Activated T-helper 2 cell treated with anti-CD3 and anti-CD28 coated beads, Interferon-gamma antibody, Interleukin-2, Interleukin-4, amounts not matched to agents 10 μg/mL and 5 μg/mL and 100 μg/mL, durations not matched to agents 14 hours and 24 hours and 36 hours (primary cell): ENCODE measurements at regions of chr7 and their contacts with region 1.

Region 1: DNA sequence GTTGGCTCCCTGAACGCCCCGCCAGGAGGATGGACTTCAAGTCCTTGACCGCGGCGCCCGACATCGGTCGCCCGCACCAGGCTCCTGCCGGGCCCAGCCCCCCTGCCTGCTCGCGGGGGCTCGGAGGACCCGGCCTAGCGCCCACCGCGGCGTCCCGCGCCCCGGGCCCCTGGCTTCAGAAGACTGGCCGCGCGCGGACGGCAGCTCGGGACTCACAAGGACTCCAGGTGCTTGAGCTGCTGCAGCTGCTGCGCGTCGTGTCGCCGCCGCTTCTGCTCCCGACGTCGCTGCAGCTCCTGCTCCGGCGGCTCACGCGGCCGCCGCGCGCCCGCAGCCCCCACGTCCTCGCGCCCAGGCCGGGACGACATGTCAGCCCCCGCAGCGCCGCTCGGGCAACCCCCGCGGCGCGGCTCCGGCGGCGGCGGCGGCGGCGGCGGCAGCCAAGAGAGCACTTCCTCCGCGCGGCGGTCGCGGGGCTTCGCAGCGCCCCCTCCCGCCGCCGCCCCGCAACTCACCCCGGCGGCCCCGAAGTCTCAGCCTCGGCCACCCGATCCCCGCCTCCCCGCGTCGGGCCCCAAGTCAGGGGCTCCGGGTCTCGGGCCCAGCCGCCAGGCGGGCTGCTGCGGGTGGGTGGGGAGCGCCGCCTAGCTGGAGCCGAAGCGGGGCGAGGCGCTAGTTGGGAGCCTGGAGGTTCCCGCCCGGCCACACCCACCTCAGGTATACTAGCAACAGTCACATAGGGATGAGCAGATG is at the start of gene RP9:
- DNase-seq: peak; percentile 73
- H3K4me3 Mint-ChIP-seq: peak within 1 kb of the TSS; percentile 90
- H3K27ac Mint-ChIP-seq: peak within 1 kb of the TSS; percentile 65
- H3K4me1 Mint-ChIP-seq: peaks cover 23% of the 10 kb centered on the region
- H3K27me3 Mint-ChIP-seq: peaks cover 22% of the 10 kb centered on the region
- total RNA-seq, gene RP9: 15.4 and 18.6 TPM in 2 replicates

Region 2: DNA sequence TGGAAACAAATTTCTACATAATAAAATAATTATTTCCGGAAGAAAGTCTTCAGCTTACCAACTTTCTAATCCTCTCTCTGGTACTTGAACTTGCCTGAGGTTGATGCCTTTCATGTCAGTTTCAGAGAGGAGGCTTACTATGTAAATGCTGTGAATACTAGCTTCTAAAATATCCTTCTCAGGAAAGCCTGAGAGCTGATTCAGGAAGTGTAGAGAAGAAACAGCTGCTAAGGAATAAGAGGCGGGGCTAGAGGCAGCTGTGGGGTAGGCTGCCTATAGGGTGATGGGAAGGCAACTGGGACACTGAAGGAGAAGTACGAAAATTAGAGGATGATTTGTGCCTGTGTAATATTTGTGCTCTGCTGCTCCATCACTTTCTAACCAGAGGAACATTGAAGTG is 544.6 kb before region 1 on chr7:
- intact Hi-C with region 1: no loop called
- DNase-seq: no peak
- H3K4me3 Mint-ChIP-seq: no peak overlapping the region
- H3K27ac Mint-ChIP-seq: no peak overlapping the region
- H3K4me1 Mint-ChIP-seq: peaks cover 15% of the 10 kb centered on the region
- H3K27me3 Mint-ChIP-seq: no peaks in the 10 kb centered on the region

Region 3: DNA sequence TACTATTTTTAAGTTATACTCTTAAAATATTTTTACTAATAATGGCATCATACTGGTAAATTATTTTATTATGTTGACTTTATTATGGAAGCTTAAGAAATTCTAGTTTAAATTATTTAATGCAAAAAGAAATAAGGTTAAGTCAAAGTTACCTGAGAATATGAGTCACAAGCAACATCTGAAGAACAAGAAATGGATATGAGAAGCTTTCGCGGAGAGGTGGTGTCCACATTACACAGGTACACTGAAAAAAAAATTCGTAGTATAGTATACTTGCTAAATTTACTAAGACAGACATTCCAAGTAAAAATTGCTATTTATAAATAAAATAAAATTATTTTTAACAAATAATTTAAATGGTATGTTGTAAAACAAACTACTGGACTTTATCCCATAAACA is 470.1 kb before region 1 on chr7:
- intact Hi-C with region 1: no loop called
- DNase-seq: no peak
- H3K4me3 Mint-ChIP-seq: no peak overlapping the region
- H3K27ac Mint-ChIP-seq: no peak overlapping the region
- H3K4me1 Mint-ChIP-seq: peaks cover 6% of the 10 kb centered on the region
- H3K27me3 Mint-ChIP-seq: peaks cover 13% of the 10 kb centered on the region

Region 4: DNA sequence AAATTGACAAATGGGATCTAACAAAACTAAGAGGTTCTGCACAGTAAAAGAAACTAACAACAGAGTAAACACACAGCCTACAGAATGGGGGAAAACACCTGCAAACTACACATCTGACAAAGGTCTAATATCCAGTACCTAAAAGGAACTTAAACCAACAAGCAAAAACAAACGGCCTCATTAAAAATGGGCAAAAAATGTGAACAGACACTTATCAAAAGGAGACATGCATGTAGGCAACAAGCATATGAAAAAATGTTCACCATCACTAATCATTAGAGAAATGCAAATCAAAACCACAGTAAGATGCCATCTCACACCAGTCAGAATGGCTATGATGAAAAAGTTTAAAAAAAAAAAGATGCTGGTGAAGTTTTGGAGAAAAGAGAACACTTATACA is 415.0 kb before region 1 on chr7:
- intact Hi-C with region 1: loop called (anchors 5 kb)
- DNase-seq: no peak
- H3K4me3 Mint-ChIP-seq: no peak overlapping the region
- H3K27ac Mint-ChIP-seq: no peak overlapping the region
- H3K4me1 Mint-ChIP-seq: peaks cover 5% of the 10 kb centered on the region
- H3K27me3 Mint-ChIP-seq: peaks cover 4% of the 10 kb centered on the region

Region 5: GRCh38 chr7:32803406-32804141 is 305.6 kb before region 1 on chr7:
- intact Hi-C with region 1: loop called (anchors 1 kb)
- DNase-seq: no peak
- H3K4me3 Mint-ChIP-seq: no peak overlapping the region
- H3K27ac Mint-ChIP-seq: no peak overlapping the region
- H3K4me1 Mint-ChIP-seq: no peaks in the 10 kb centered on the region
- H3K27me3 Mint-ChIP-seq: peaks cover 3% of the 10 kb centered on the region

Region 6: DNA sequence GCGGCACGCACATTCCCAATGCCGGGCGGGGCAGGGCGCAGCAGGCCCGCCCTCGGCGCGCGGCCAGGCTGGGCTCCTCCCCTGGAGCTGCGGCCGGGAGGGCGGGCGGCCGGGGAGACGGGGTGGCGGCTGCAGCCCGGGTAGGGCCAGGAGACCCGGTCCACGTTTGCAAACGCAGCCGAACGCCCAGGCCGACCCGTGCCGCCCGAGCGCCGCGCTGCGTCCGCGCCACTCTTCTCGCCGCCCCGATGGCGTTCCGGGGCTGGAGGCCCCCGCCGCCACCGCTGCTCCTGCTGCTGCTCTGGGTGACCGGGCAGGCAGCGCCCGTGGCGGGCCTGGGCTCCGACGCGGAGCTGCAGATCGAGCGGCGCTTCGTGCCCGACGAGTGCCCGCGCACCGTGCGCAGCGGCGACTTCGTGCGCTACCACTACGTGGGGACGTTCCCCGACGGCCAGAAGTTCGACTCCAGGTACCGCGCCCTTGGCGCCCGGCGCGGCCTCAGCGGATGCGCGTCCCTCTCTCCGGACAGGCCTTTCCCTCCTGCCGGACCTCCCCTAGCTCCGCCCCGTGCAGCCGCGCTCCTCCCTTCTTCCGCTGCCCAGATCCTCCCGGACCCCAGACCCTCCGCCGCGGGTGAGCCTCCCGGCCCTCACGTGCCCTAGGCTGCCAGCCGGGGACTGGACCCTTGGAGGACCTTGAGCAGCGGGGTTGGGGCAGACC is 151.7 kb before region 1 on chr7 and contains the start of gene FKBP9:
- intact Hi-C with region 1: loop called (anchors 5 kb)
- DNase-seq: peak; percentile 14
- H3K4me3 Mint-ChIP-seq: peak within 1 kb of the TSS; percentile 83
- H3K27ac Mint-ChIP-seq: no peak within 1 kb of the TSS
- H3K4me1 Mint-ChIP-seq: peaks cover 4% of the 10 kb centered on the region
- H3K27me3 Mint-ChIP-seq: peaks cover 24% of the 10 kb centered on the region
- total RNA-seq, gene FKBP9: 3.0 and 3.5 TPM in 2 replicates

Region 7: DNA sequence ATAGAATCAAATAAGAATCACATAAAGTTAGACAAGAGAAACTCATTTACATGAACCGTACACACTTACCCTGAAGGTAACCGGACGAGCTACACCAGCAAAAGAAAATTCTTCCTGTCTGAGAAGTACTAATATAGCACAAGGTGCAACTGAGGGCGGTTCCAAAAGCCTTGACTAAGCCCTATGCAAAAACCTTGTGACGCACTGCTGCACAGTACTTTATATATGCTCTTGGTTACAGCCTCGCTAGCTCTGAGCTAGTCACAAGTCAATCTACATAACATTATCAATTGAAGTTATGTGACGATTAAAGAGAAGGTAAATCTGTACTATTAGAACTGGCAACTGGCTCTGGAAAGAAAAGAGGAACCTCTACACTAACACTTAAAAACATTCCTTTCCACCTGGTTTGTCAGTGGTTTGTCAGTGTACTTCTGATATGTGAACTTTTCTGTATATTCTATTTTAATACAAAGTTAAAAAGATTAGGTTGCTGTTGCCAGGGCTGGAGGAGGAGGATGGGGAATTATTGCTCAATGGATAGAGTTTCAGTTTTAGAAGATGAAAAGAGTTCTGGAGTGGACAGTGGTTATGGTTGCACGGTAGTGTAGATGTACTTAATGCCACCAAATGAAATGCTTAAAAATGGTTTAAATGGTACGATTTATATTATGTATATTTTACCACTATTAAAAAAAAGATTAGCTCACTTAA is 68.2 kb before region 1 on chr7:
- intact Hi-C with region 1: no loop called
- DNase-seq: peak; percentile 62
- H3K4me3 Mint-ChIP-seq: peak overlapping the region; percentile 37
- H3K27ac Mint-ChIP-seq: peak overlapping the region; percentile 56
- H3K4me1 Mint-ChIP-seq: peaks cover 48% of the 10 kb centered on the region
- H3K27me3 Mint-ChIP-seq: no peaks in the 10 kb centered on the region

Region 8: GRCh38 chr7:33128990-33129805 is 20.0 kb after region 1 on chr7 and contains the start of gene BBS9:
- intact Hi-C with region 1: loop called (anchors 1 kb)
- DNase-seq: peak; percentile 89
- H3K4me3 Mint-ChIP-seq: peak within 1 kb of the TSS; percentile 96
- H3K27ac Mint-ChIP-seq: peak within 1 kb of the TSS; percentile 83
- H3K4me1 Mint-ChIP-seq: peaks cover 19% of the 10 kb centered on the region
- H3K27me3 Mint-ChIP-seq: no peaks in the 10 kb centered on the region
- total RNA-seq, gene BBS9: 4.8 and 6.8 TPM in 2 replicates